Vagina (tissue), 2 donors: ENCODE measurements at regions of chr18 and their contacts with region 1.

Region 1: GRCh38 chr18:48896690-48897511 is 53.9 kb downstream of the SMAD7 start:
- DNase-seq: no peak
- H3K4me3 ChIP-seq: no peak overlapping the region
- H3K27ac ChIP-seq: peak overlapping the region; percentile 29
- H3K4me1 ChIP-seq: peaks cover 50% of the 10 kb centered on the region
- H3K27me3 ChIP-seq: no peaks in the 10 kb centered on the region
- CTCF ChIP-seq: no peak
- POLR2A ChIP-seq: no peak

Region 2: GRCh38 chr18:49486953-49487710 is 590.2 kb after region 1 on chr18 and contains the start of gene C18orf32:
- intact Hi-C with region 1: loop called (anchors 10 kb)
- DNase-seq: peak in 1 of 2 donors; percentile 93
- H3K4me3 ChIP-seq: peak within 1 kb of the TSS; percentile 60 to 76
- H3K27ac ChIP-seq: peak within 1 kb of the TSS; percentile 92
- H3K4me1 ChIP-seq: peaks cover 60% of the 10 kb centered on the region
- H3K27me3 ChIP-seq: no peaks in the 10 kb centered on the region
- CTCF ChIP-seq: no peak
- POLR2A ChIP-seq: peak; percentile 67 to 96
- total RNA-seq, gene C18orf32: 21.1 TPM